ENCODE measurements at regions of chr14 and their contacts with region 1.

Region 1: DNA sequence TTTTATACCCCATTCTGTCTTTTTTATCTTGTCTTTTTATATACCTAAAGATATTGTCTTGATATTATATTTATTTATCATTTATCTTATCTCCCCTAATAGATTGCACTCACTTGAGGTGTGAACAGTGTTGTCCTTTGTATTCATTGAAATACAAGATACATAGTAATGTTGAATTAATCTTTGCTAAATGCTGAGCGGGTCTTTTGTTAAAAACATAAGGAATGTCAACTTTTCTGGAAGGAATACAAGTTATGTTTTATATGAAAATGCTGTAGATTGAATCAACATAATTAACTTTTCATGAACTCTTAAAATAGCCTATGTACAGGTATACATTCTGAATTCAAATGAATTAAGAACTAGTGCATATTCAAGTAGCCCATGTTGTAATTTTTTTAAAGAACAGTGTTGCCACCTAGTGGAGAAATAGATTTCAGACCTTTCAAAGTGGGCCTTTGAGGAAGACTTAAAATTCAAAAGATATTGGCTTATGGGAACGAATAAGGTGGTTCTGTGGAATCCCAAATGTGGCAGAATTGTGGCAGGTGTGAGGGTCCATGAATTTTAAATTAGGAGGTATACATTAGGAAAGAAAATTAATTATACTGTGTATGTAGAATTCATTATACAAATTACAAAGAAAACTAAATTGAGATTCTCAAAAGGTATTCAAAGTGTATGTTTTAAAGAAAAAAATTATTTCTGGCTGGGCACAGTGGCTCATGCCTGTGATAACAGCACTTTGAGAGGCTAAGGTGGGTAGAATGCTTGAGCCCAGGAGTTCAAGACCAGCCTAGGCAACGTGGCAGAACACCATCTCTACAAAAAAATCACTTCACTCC is 19.1 kb downstream of the BBOF1 start:
- DNase-seq: peak; percentile 66
- ATAC-seq: no peak
- H3K4me3 ChIP-seq: no peak overlapping the region
- H3K4me3 Mint-ChIP-seq: no peak overlapping the region
- H3K27ac ChIP-seq: no peak overlapping the region
- H3K27ac Mint-ChIP-seq: no peak overlapping the region
- H3K4me1 ChIP-seq: no peaks in the 10 kb centered on the region
- H3K4me1 Mint-ChIP-seq: no peaks in the 10 kb centered on the region
- H3K27me3 ChIP-seq: no peaks in the 10 kb centered on the region
- H3K27me3 Mint-ChIP-seq: no peaks in the 10 kb centered on the region
- CTCF ChIP-seq: peak; percentile 90

Region 2: GRCh38 chr14:73503648-73504047 is 534.6 kb before region 1 on chr14:
- CTCF ChIA-PET with region 1: no interaction called
- POLR2A ChIA-PET with region 1: no interaction called
- intact Hi-C with region 1: loop called (anchors 10 kb)
- DNase-seq: no peak
- ATAC-seq: no peak
- H3K4me3 ChIP-seq: no peak overlapping the region
- H3K4me3 Mint-ChIP-seq: no peak overlapping the region
- H3K27ac ChIP-seq: no peak overlapping the region
- H3K27ac Mint-ChIP-seq: no peak overlapping the region
- H3K4me1 ChIP-seq: no peaks in the 10 kb centered on the region
- H3K4me1 Mint-ChIP-seq: no peaks in the 10 kb centered on the region
- H3K27me3 ChIP-seq: no peaks in the 10 kb centered on the region
- H3K27me3 Mint-ChIP-seq: no peaks in the 10 kb centered on the region
- CTCF ChIP-seq: no peak

Region 3: GRCh38 chr14:73958591-73958990 is 79.6 kb before region 1 on chr14:
- CTCF ChIA-PET with region 1: no interaction called
- POLR2A ChIA-PET with region 1: no interaction called
- intact Hi-C with region 1: no loop called
- DNase-seq: no peak
- ATAC-seq: no peak
- H3K4me3 ChIP-seq: no peak overlapping the region
- H3K4me3 Mint-ChIP-seq: no peak overlapping the region
- H3K27ac ChIP-seq: no peak overlapping the region
- H3K27ac Mint-ChIP-seq: no peak overlapping the region
- H3K4me1 ChIP-seq: no peaks in the 10 kb centered on the region
- H3K4me1 Mint-ChIP-seq: no peaks in the 10 kb centered on the region
- H3K27me3 ChIP-seq: no peaks in the 10 kb centered on the region
- H3K27me3 Mint-ChIP-seq: no peaks in the 10 kb centered on the region
- CTCF ChIP-seq: no peak

Measured in B cell (primary cell).